ENCODE measurements at regions of chr10 and their contacts with region 1.

Region 1: DNA sequence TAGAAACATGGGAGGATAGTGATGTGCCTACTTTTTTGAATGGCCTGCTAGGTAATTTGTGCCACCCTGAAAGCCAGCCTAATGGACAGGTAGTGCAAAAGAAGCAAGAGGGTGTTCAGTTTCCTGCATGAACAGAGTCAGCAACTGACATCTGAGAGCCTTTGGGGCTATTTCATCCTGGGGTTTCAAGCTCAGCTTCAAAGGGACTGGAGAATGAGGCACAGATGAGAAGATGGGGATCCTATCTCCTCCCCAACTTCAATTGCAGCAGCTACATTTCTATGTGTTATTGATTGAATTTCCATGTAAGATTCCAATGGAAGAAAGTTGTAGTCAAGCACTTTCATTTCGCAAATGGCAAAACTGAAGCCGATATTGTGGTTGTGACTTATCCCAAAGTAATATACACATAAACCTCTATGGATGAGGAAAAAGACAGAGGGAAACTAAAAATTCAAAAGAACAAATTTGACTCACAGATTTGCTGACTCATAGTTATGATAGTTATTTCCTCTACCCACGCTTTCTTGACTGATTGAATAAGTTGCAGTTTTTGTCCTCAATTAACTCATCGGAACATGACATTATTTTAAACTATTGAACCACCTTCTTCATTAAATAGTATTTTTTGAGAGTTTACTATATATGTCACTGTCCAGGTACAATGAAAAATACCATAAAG is 42.6 kb upstream of the NRP1 start:
- DNase-seq: no peak
- ATAC-seq: no peak
- H3K4me3 ChIP-seq: no peak overlapping the region
- H3K27ac ChIP-seq: peak overlapping the region in 1 of 10 donors; percentile 38
- H3K4me1 ChIP-seq: peaks cover 0 to 14% (median 0%) of the 10 kb centered on the region in 9 donors
- H3K27me3 ChIP-seq: no peaks in the 10 kb centered on the region
- CTCF ChIP-seq: no peak

Region 2: GRCh38 chr10:33154590-33154989 is 222.5 kb before region 1 on chr10:
- intact Hi-C with region 1: no loop called
- DNase-seq: no peak
- ATAC-seq: peak in 7 of 8 donors; percentile 27 to 64 (median 43)
- H3K4me3 ChIP-seq: no peak overlapping the region
- H3K27ac ChIP-seq: peak overlapping the region in 9 of 10 donors; percentile 29 to 82 (median 66)
- H3K4me1 ChIP-seq: peaks cover 2 to 57% (median 18%) of the 10 kb centered on the region in 9 donors
- H3K27me3 ChIP-seq: peaks cover 0 to 7% (median 0%) of the 10 kb centered on the region in 7 donors
- CTCF ChIP-seq: no peak

Region 3: GRCh38 chr10:34835908-34836508 is 1458.9 kb after region 1 on chr10:
- intact Hi-C with region 1: loop called in 1 of 10 experiments (anchors 10 kb)
- DNase-seq: no peak
- ATAC-seq: no peak
- H3K4me3 ChIP-seq: no peak overlapping the region
- H3K27ac ChIP-seq: no peak overlapping the region
- H3K4me1 ChIP-seq: no peaks in the 10 kb centered on the region
- H3K27me3 ChIP-seq: peaks cover 0 to 12% (median 0%) of the 10 kb centered on the region in 7 donors
- CTCF ChIP-seq: no peak